B cell (primary cell): ENCODE measurements at regions of chr1 and their contacts with region 1.

Region 1: DNA sequence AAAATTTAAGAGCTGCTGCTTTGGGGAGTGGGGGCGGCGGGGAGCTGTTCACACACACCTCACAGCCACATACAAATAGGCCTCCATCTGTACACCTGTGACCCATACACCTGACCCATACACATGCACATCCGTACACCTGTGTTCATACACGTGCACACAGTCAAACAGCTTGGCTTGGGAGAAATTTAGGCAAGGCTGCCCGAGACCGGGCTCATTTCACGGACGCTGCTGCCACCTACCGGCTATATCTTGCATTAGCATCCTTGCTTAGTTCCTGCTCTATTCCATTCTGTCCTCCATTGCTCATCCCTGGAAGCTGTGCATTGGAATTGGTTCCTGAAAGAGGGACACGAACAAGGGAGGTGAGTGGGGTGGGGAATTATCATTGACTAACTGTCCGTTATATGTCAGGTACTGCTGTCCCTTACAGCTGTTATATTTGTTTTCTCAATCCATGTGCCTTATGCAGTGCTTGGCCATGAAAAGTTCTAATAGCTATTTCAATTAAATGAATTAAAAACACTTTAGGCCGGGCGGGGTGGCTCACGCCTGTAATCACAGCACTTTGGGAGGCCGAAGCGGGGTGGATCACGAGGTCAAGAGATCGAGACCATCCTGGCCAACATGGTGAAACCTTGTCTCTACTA is 37.1 kb upstream of the EPB41 start:
- DNase-seq: peak; percentile 84
- ATAC-seq: peak; percentile 78
- H3K4me3 ChIP-seq: no peak overlapping the region
- H3K4me3 Mint-ChIP-seq: no peak overlapping the region
- H3K27ac ChIP-seq: no peak overlapping the region
- H3K27ac Mint-ChIP-seq: no peak overlapping the region
- H3K4me1 ChIP-seq: peaks cover 4 to 5% of the 10 kb centered on the region in 2 donors
- H3K4me1 Mint-ChIP-seq: peaks cover 8% of the 10 kb centered on the region
- H3K27me3 ChIP-seq: no peaks in the 10 kb centered on the region
- H3K27me3 Mint-ChIP-seq: no peaks in the 10 kb centered on the region
- CTCF ChIP-seq: peak; percentile 99

Region 2: DNA sequence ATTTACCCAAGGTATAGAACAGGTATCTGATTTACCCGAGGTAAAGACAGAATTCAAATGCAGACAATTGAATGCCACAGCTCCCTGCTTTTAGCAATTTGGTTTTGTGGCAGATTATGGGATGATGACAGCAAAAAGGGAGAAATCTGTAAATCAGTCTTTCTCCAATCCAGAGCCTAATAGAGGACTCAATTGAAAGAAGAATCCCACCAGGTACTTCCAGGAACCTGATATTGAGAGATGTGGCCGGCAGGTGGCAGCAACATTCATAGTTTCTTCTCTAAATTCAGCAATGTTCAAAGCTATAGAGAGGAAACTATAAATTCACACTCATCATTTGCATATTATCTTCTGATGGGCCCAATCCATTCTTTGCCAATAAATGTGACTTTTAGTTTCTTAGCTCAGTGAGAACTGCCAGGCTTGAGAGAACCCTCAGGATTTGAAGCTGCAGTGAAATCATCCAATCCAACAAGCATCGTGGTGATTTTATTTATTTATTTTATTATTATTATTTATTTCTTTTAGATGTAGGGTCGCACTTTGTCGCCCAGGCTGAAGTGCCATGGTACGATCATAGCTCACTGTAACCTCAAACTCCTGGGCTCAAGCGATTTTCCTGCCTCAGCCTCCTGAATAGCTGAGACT is 517.5 kb before region 1 on chr1:
- CTCF ChIA-PET with region 1: interaction called, 115 read pairs
- POLR2A ChIA-PET with region 1: no interaction called
- intact Hi-C with region 1: loop called (anchors 1 kb)
- DNase-seq: peak; percentile 78
- ATAC-seq: peak; percentile 73
- H3K4me3 ChIP-seq: no peak overlapping the region
- H3K4me3 Mint-ChIP-seq: no peak overlapping the region
- H3K27ac ChIP-seq: no peak overlapping the region
- H3K27ac Mint-ChIP-seq: no peak overlapping the region
- H3K4me1 ChIP-seq: peaks cover 0 to 4% of the 10 kb centered on the region in 2 donors
- H3K4me1 Mint-ChIP-seq: peaks cover 2% of the 10 kb centered on the region
- H3K27me3 ChIP-seq: no peaks in the 10 kb centered on the region
- H3K27me3 Mint-ChIP-seq: no peaks in the 10 kb centered on the region
- CTCF ChIP-seq: peak; percentile 80

Region 3: GRCh38 chr1:28518000-28518744 is 359.1 kb before region 1 on chr1:
- CTCF ChIA-PET with region 1: interaction called, 24 read pairs
- POLR2A ChIA-PET with region 1: interaction called, 3 read pairs
- intact Hi-C with region 1: loop called (anchors 1 kb)
- DNase-seq: peak; percentile 93
- ATAC-seq: peak; percentile 94
- H3K4me3 ChIP-seq: peak overlapping the region; percentile 53 to 68 (median 55)
- H3K4me3 Mint-ChIP-seq: peak overlapping the region; percentile 89
- H3K27ac ChIP-seq: peak overlapping the region in 1 of 2 donors; percentile 45
- H3K27ac Mint-ChIP-seq: peak overlapping the region; percentile 89
- H3K4me1 ChIP-seq: peaks cover 11 to 18% of the 10 kb centered on the region in 2 donors
- H3K4me1 Mint-ChIP-seq: peaks cover 30% of the 10 kb centered on the region
- H3K27me3 ChIP-seq: no peaks in the 10 kb centered on the region
- H3K27me3 Mint-ChIP-seq: no peaks in the 10 kb centered on the region
- CTCF ChIP-seq: peak; percentile 98

Region 4: DNA sequence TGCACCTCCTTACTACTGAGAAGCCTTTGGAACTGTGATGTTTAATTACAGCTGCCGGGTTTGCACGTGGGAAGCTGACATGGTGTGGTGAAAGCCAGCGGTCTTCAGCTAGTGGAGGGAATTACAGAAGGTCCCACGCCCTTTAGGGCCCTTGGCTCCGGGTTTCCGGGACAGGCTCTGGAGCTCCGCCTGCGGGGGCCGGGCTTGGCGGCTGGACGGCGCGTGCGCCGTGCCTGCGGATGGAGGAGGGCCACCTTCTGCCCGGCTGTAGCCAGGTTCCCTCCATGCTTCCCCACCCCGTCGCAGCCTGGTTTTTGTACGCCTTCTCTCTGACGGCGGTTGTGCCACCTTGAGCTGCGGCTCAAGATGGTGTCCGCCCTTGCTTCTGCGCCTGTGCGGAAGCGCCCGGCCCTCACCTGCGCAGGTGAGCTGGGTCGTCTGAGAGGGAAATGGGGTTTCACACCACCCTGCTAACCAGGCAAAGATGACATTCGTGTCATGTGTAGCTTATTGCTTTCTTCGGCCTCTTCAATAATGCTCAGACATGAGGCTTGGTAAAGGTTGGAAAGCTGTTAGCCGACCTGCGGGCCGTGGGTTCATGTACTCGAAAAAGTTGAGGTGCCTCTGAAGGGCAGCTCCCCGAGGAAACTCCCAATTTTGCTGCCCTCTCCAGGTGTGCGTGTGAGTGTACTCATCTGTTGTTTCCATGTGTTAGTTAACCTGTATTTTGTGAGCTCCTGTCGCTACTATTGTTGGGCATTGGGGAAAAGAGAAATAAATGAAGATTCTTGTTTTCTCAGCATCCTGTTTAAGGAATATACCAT is 101.9 kb before region 1 on chr1:
- CTCF ChIA-PET with region 1: interaction called, 36 read pairs
- POLR2A ChIA-PET with region 1: no interaction called
- intact Hi-C with region 1: no loop called
- DNase-seq: peak; percentile 79
- ATAC-seq: peak; percentile 95
- H3K4me3 ChIP-seq: peak overlapping the region; percentile 58 to 77 (median 63)
- H3K4me3 Mint-ChIP-seq: peak overlapping the region; percentile 90
- H3K27ac ChIP-seq: peak overlapping the region; percentile 51 to 59
- H3K27ac Mint-ChIP-seq: peak overlapping the region; percentile 87
- H3K4me1 ChIP-seq: peaks cover 7 to 15% of the 10 kb centered on the region in 2 donors
- H3K4me1 Mint-ChIP-seq: peaks cover 11% of the 10 kb centered on the region
- H3K27me3 ChIP-seq: no peaks in the 10 kb centered on the region
- H3K27me3 Mint-ChIP-seq: no peaks in the 10 kb centered on the region
- CTCF ChIP-seq: no peak

Region 5: DNA sequence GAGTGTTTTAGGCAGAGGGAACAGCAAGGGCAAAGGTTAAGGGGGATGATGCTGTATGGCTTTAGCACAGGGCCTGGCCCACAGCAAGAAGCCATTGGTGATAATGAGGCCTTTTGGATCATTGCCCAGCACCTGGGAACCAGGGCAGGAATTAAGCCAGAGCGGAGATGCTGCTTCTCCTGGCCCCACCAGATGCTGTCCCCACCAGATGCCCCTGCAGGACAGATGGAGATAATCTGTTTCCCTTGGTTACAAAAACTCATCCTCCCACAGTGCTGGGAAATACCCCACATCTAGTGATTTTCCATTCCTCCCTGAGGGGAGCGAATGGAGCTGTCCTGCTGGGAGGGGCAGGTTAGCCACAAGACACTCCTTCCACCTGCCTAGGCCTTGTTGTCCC is 46.4 kb before region 1 on chr1:
- CTCF ChIA-PET with region 1: no interaction called
- POLR2A ChIA-PET with region 1: no interaction called
- intact Hi-C with region 1: no loop called
- DNase-seq: no peak
- ATAC-seq: no peak
- H3K4me3 ChIP-seq: no peak overlapping the region
- H3K4me3 Mint-ChIP-seq: no peak overlapping the region
- H3K27ac ChIP-seq: no peak overlapping the region
- H3K27ac Mint-ChIP-seq: no peak overlapping the region
- H3K4me1 ChIP-seq: no peaks in the 10 kb centered on the region
- H3K4me1 Mint-ChIP-seq: no peaks in the 10 kb centered on the region
- H3K27me3 ChIP-seq: peaks cover 0 to 3% (median 2%) of the 10 kb centered on the region in 4 experiments
- H3K27me3 Mint-ChIP-seq: peaks cover 14% of the 10 kb centered on the region
- CTCF ChIP-seq: no peak

Region 6: GRCh38 chr1:28865997-28866650 is 11.1 kb before region 1 on chr1:
- CTCF ChIA-PET with region 1: interaction called, 19 read pairs
- POLR2A ChIA-PET with region 1: no interaction called
- intact Hi-C with region 1: no loop called
- DNase-seq: no peak
- ATAC-seq: no peak
- H3K4me3 ChIP-seq: no peak overlapping the region
- H3K4me3 Mint-ChIP-seq: no peak overlapping the region
- H3K27ac ChIP-seq: no peak overlapping the region
- H3K27ac Mint-ChIP-seq: no peak overlapping the region
- H3K4me1 ChIP-seq: no peaks in the 10 kb centered on the region
- H3K4me1 Mint-ChIP-seq: no peaks in the 10 kb centered on the region
- H3K27me3 ChIP-seq: peaks cover 0 to 7% (median 0%) of the 10 kb centered on the region in 4 experiments
- H3K27me3 Mint-ChIP-seq: peaks cover 3% of the 10 kb centered on the region
- CTCF ChIP-seq: no peak

Region 7: GRCh38 chr1:29812408-29813135 is 935.3 kb after region 1 on chr1:
- CTCF ChIA-PET with region 1: no interaction called
- POLR2A ChIA-PET with region 1: no interaction called
- intact Hi-C with region 1: no loop called
- DNase-seq: no peak
- ATAC-seq: no peak
- H3K4me3 ChIP-seq: no peak overlapping the region
- H3K4me3 Mint-ChIP-seq: no peak overlapping the region
- H3K27ac ChIP-seq: no peak overlapping the region
- H3K27ac Mint-ChIP-seq: no peak overlapping the region
- H3K4me1 ChIP-seq: no peaks in the 10 kb centered on the region
- H3K4me1 Mint-ChIP-seq: no peaks in the 10 kb centered on the region
- H3K27me3 ChIP-seq: no peaks in the 10 kb centered on the region
- H3K27me3 Mint-ChIP-seq: no peaks in the 10 kb centered on the region
- CTCF ChIP-seq: no peak